PC-3 (cell line): ENCODE measurements at regions of chr7 and their contacts with region 1.

Region 1: DNA sequence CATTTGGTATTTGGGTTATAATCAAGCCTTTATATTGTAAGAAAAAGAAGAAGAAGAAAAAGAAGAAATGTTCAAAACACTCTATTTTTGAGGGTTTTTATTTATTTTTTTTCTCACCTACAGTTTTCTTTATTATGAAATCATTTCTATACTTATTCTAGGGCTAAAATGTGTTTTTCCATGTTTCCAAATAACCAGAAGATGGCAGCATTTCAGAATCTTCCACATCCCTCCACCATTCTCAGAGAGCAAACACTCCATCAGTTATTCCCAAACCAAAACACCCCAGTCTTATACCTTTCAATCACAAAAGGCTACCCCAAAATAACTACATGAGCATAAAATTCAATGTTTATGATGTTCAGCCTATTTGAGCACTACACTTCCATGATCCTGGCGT is 38.7 kb upstream of the PPP1R17 start:
- DNase-seq: peak; percentile 15
- ATAC-seq: 0 out of 2 replicates have a peak, but pooled peaks have one; percentile 24
- H3K4me3 ChIP-seq: no peak overlapping the region
- H3K27ac ChIP-seq: no peak overlapping the region
- H3K4me1 ChIP-seq: no peaks in the 10 kb centered on the region
- H3K27me3 ChIP-seq: peaks cover 76% of the 10 kb centered on the region
- CTCF ChIP-seq: peak; percentile 43; the same call in 1 of the 2 replicates

Region 2: GRCh38 chr7:31735991-31736982 is 88.0 kb after region 1 on chr7:
- CTCF ChIA-PET with region 1: no interaction called
- POLR2A ChIA-PET with region 1: no interaction called
- intact Hi-C with region 1: loop called (anchors 1 kb)
- DNase-seq: peak; percentile 79
- ATAC-seq: peak; percentile 95
- H3K4me3 ChIP-seq: no peak overlapping the region
- H3K27ac ChIP-seq: no peak overlapping the region
- H3K4me1 ChIP-seq: no peaks in the 10 kb centered on the region
- H3K27me3 ChIP-seq: no peaks in the 10 kb centered on the region
- CTCF ChIP-seq: peak; percentile 84

Region 3: GRCh38 chr7:31853380-31853779 is 205.1 kb after region 1 on chr7:
- CTCF ChIA-PET with region 1: no interaction called
- POLR2A ChIA-PET with region 1: no interaction called
- intact Hi-C with region 1: no loop called
- DNase-seq: no peak
- ATAC-seq: no peak
- H3K4me3 ChIP-seq: no peak overlapping the region
- H3K27ac ChIP-seq: no peak overlapping the region
- H3K4me1 ChIP-seq: no peaks in the 10 kb centered on the region
- H3K27me3 ChIP-seq: no peaks in the 10 kb centered on the region
- CTCF ChIP-seq: no peak